AG04449 (cell line): ENCODE measurements at regions of chr7 and their contacts with region 1.

Region 1: GRCh38 chr7:34321000-34321581 is 336.9 kb upstream of the NPSR1 start:
- DNase-seq: no peak
- H3K4me3 ChIP-seq: no peak overlapping the region
- CTCF ChIP-seq: peak; percentile 90

Region 2: GRCh38 chr7:34133983-34134782 is 186.9 kb before region 1 on chr7:
- CTCF ChIA-PET with region 1: interaction called, 42 read pairs
- POLR2A ChIA-PET with region 1: no interaction called
- DNase-seq: no peak
- H3K4me3 ChIP-seq: no peak overlapping the region
- CTCF ChIP-seq: peak; percentile 76

Region 3: GRCh38 chr7:34309116-34309515 is 12.0 kb before region 1 on chr7:
- CTCF ChIA-PET with region 1: interaction called, 19 read pairs
- POLR2A ChIA-PET with region 1: no interaction called
- DNase-seq: no peak
- H3K4me3 ChIP-seq: no peak overlapping the region
- CTCF ChIP-seq: no peak

Region 4: DNA sequence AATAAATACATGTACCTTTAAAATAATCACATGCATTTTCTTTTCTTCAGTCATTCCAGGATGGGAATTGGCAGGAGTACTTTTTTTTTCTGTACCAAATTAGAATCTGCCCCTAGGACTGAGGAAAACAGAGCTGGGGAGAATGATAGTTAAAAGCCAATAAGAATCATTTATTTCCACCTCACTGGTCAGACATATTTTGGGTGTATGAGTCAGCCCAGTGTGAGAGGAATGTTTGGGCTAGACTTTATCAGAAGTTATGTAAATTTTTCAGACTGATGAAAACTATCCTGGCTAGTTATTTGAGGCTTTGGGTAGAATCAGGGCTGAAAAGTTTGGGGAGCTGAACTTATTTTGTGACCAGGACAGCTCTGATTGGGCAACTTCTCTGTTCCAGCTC is 33.8 kb after region 1 on chr7:
- CTCF ChIA-PET with region 1: interaction called, 11 read pairs
- POLR2A ChIA-PET with region 1: no interaction called
- DNase-seq: peak; percentile 46
- H3K4me3 ChIP-seq: no peak overlapping the region
- CTCF ChIP-seq: no peak

Region 5: GRCh38 chr7:34430458-34430857 is 109.4 kb after region 1 on chr7:
- CTCF ChIA-PET with region 1: interaction called, 31 read pairs
- POLR2A ChIA-PET with region 1: no interaction called
- DNase-seq: peak; percentile 23
- H3K4me3 ChIP-seq: no peak overlapping the region
- CTCF ChIP-seq: peak; percentile 44